ENCODE measurements at regions of chr17 and their contacts with region 1.

Region 1: GRCh38 chr17:34542700-34543336 is 36.6 kb upstream of the TMEM132E start:
- H3K4me3 ChIP-seq: no peak overlapping the region
- H3K27ac ChIP-seq: no peak overlapping the region
- H3K4me1 ChIP-seq: no peaks in the 10 kb centered on the region
- CTCF ChIP-seq: peak; percentile 40; the same call in 1 of the 2 replicates

Region 2: GRCh38 chr17:34527908-34528470 is 14.8 kb before region 1 on chr17:
- CTCF ChIA-PET with region 1: interaction called, 18 read pairs
- POLR2A ChIA-PET with region 1: no interaction called
- H3K4me3 ChIP-seq: no peak overlapping the region
- H3K27ac ChIP-seq: no peak overlapping the region
- H3K4me1 ChIP-seq: no peaks in the 10 kb centered on the region
- CTCF ChIP-seq: no peak

Region 3: GRCh38 chr17:34579017-34579946 is 36.5 kb after region 1 on chr17 and contains the start of gene TMEM132E:
- CTCF ChIA-PET with region 1: interaction called, 15 read pairs
- POLR2A ChIA-PET with region 1: no interaction called
- H3K4me3 ChIP-seq: peak within 1 kb of the TSS; percentile 57
- H3K27ac ChIP-seq: peak within 1 kb of the TSS; percentile 80; the same call in 1 of the 2 replicates
- H3K4me1 ChIP-seq: peaks cover 18% of the 10 kb centered on the region
- CTCF ChIP-seq: peak; percentile 76

Region 4: GRCh38 chr17:34637548-34638525 is 95.0 kb after region 1 on chr17:
- CTCF ChIA-PET with region 1: interaction called, 73 read pairs
- POLR2A ChIA-PET with region 1: interaction called, 5 read pairs
- H3K4me3 ChIP-seq: no peak overlapping the region
- H3K27ac ChIP-seq: no peak overlapping the region
- H3K4me1 ChIP-seq: no peaks in the 10 kb centered on the region
- CTCF ChIP-seq: peak; percentile 80

Region 5: DNA sequence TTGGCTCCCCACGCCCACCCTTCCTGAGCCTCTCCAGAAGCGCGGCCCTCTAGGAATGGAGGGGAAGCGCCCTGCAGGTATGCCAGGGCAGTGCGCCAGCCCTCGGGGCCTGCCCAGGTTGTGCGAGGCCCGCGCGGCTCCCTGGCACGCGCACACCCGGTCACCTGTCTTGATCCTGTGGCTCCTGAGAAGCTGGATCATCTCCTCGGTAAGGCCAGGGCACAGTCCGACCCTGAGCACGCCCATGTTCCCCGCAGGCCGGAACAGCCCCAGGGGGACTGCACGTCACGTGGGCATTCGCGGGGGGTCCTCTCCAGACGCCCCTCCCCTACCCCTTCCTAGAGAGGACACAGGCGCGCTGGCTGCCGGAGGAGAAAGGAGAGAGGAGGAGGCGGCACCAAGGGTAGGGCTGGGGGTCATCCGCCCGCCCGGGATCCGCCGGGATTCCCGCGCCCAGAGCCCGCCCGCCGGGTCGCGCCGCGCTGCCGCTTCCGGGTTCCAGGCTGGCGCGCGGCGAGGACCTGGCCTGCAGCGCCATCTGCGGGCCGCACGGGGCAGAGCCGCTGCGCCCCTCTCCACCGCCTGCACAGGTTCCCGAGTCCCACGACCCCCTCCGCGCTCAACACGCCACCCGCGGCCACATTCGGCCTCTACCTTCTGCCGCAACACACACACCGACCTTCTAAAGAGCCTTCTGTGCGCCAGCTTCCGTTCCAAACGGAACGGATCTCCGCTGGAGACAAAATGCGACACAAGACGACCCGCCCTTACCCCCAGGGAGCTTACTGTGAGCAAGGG is 576.7 kb after region 1 on chr17 and contains the start of gene RAD51D:
- CTCF ChIA-PET with region 1: interaction called, 12 read pairs
- POLR2A ChIA-PET with region 1: no interaction called
- H3K4me3 ChIP-seq: peak within 1 kb of the TSS; percentile 72
- H3K27ac ChIP-seq: peak within 1 kb of the TSS; percentile 58
- H3K4me1 ChIP-seq: peaks cover 5% of the 10 kb centered on the region
- CTCF ChIP-seq: peak; percentile 97